Activated CD8-positive, alpha-beta T cell treated with anti-CD3 and anti-CD28 coated beads for 36 hours (primary cell): ENCODE measurements at regions of chr3 and their contacts with region 1.

Region 1: DNA sequence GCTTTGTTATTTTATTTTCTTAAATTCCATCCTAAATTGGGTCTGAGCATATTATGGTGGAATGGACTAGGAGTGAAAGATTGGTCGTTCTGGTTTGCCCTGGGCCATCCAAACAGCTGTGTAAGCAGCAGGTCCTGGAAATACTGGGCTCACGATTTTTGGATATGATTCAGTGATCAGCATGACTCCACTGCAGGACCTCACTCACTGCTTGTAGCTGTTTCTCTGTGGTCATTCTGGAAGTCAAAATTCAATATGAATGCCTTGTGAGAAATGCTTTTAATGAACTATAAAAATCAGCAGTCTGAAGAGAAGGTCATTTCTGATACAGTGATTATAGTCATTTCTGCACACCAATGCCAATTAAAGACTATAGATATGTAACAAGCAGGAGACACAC is 185.0 kb downstream of the RBMS3 start:
- DNase-seq: no peak
- ATAC-seq: no peak
- H3K4me3 Mint-ChIP-seq: no peak overlapping the region
- H3K27ac Mint-ChIP-seq: no peak overlapping the region
- H3K4me1 Mint-ChIP-seq: no peaks in the 10 kb centered on the region
- H3K27me3 Mint-ChIP-seq: no peaks in the 10 kb centered on the region
- CTCF ChIP-seq: no peak

Region 2: DNA sequence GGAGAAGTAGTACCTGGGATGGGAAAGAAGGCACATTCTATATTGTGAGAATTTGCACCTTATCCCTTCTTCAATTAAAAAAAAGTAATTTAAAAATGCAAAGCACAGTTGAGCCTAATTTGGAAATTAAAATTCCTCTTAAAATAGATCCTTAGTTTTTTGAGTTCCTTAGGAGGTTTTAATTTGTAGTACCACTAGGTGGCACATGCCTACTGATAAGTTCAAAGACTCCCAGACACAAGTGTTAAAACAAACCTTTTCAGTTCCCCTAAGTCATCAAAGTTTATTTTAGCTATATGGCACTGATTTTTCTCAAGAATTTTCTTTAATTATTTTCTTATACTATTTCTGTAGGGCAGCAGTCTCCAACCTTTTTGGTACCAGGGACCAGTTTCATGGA is 989.6 kb before region 1 on chr3:
- CTCF ChIA-PET with region 1: no interaction called
- POLR2A ChIA-PET with region 1: no interaction called
- intact Hi-C with region 1: loop called (anchors 5 kb)
- DNase-seq: no peak
- ATAC-seq: no peak
- H3K4me3 Mint-ChIP-seq: no peak overlapping the region
- H3K27ac Mint-ChIP-seq: no peak overlapping the region
- H3K4me1 Mint-ChIP-seq: no peaks in the 10 kb centered on the region
- H3K27me3 Mint-ChIP-seq: no peaks in the 10 kb centered on the region
- CTCF ChIP-seq: peak; percentile 45

Region 3: GRCh38 chr3:29478611-29479010 is 12.8 kb after region 1 on chr3:
- CTCF ChIA-PET with region 1: no interaction called
- POLR2A ChIA-PET with region 1: no interaction called
- intact Hi-C with region 1: no loop called
- DNase-seq: no peak
- ATAC-seq: no peak
- H3K4me3 Mint-ChIP-seq: no peak overlapping the region
- H3K27ac Mint-ChIP-seq: no peak overlapping the region
- H3K4me1 Mint-ChIP-seq: no peaks in the 10 kb centered on the region
- H3K27me3 Mint-ChIP-seq: no peaks in the 10 kb centered on the region
- CTCF ChIP-seq: no peak

Region 4: GRCh38 chr3:29494305-29495036 is 28.6 kb after region 1 on chr3:
- CTCF ChIA-PET with region 1: no interaction called
- POLR2A ChIA-PET with region 1: no interaction called
- intact Hi-C with region 1: no loop called
- DNase-seq: no peak
- ATAC-seq: no peak
- H3K4me3 Mint-ChIP-seq: no peak overlapping the region
- H3K27ac Mint-ChIP-seq: no peak overlapping the region
- H3K4me1 Mint-ChIP-seq: no peaks in the 10 kb centered on the region
- H3K27me3 Mint-ChIP-seq: no peaks in the 10 kb centered on the region
- CTCF ChIP-seq: no peak

Region 5: GRCh38 chr3:29751647-29752314 is 285.9 kb after region 1 on chr3:
- CTCF ChIA-PET with region 1: no interaction called
- POLR2A ChIA-PET with region 1: no interaction called
- intact Hi-C with region 1: no loop called
- DNase-seq: no peak
- ATAC-seq: no peak
- H3K4me3 Mint-ChIP-seq: no peak overlapping the region
- H3K27ac Mint-ChIP-seq: no peak overlapping the region
- H3K4me1 Mint-ChIP-seq: no peaks in the 10 kb centered on the region
- H3K27me3 Mint-ChIP-seq: peaks cover 7% of the 10 kb centered on the region
- CTCF ChIP-seq: no peak